CD4-positive, alpha-beta T cell (primary cell): ENCODE measurements at regions of chr3 and their contacts with region 1.

Region 1: GRCh38 chr3:114789803-114790202 is 357.3 kb downstream of the ZBTB20 start:
- DNase-seq: no peak
- ATAC-seq: no peak
- H3K4me3 ChIP-seq: no peak overlapping the region
- H3K4me3 Mint-ChIP-seq: no peak overlapping the region
- H3K27ac ChIP-seq: no peak overlapping the region
- H3K27ac Mint-ChIP-seq: no peak overlapping the region
- H3K4me1 ChIP-seq: no peaks in the 10 kb centered on the region
- H3K4me1 Mint-ChIP-seq: peaks cover 9% of the 10 kb centered on the region
- H3K27me3 ChIP-seq: no peaks in the 10 kb centered on the region
- H3K27me3 Mint-ChIP-seq: no peaks in the 10 kb centered on the region
- CTCF ChIP-seq: no peak

Region 2: DNA sequence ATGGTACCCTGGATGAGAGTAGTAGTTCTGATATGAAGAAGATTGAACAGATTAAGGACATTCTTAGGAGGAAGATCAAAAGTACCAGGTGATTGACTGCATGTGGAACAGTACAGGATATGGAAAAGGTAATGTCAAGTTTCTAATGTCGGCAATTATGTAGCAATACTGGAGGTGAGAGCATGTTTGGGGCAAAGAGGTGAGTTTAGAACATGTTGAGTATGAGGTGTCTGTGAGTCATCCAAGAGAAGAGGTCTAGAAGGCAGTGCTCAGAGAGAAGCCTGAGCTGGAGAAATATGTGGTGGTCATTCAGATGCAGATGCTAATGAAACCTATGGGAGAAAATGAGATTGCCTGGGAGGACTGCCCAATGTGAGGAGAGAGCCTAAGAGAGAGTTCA is 51.7 kb after region 1 on chr3:
- CTCF ChIA-PET with region 1: no interaction called
- POLR2A ChIA-PET with region 1: no interaction called
- intact Hi-C with region 1: loop called in 1 of 2 experiments (anchors 2 kb)
- DNase-seq: no peak
- ATAC-seq: no peak
- H3K4me3 ChIP-seq: no peak overlapping the region
- H3K4me3 Mint-ChIP-seq: no peak overlapping the region
- H3K27ac ChIP-seq: no peak overlapping the region
- H3K27ac Mint-ChIP-seq: no peak overlapping the region
- H3K4me1 ChIP-seq: no peaks in the 10 kb centered on the region
- H3K4me1 Mint-ChIP-seq: peaks cover 6% of the 10 kb centered on the region
- H3K27me3 ChIP-seq: no peaks in the 10 kb centered on the region
- H3K27me3 Mint-ChIP-seq: no peaks in the 10 kb centered on the region
- CTCF ChIP-seq: no peak